Caco-2 (cell line): ENCODE measurements at regions of chr15 and their contacts with region 1.

Region 1: DNA sequence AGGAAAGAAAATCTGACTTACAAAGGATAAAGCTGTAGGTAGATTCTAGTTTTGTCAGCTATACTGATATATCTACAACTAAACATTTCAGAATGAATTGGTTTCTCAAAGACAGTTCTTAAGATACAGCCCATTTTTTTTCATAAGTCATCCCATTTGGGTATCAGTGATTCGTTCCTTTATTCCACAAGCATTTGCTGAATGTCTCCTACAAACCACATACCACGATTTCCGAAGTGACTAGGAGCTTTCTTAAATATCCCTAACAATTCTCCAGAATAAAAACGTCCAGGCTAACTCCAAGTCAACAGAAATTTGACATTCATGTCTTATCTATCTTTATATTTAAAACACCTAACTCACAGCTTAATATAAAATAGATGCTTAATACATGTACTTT is 59.8 kb downstream of the TP53BP1 start:
- DNase-seq: no peak
- H3K4me3 ChIP-seq: no peak overlapping the region
- H3K4me3 Mint-ChIP-seq: no peak overlapping the region
- H3K27ac Mint-ChIP-seq: no peak overlapping the region
- H3K4me1 ChIP-seq: no peaks in the 10 kb centered on the region
- H3K4me1 Mint-ChIP-seq: no peaks in the 10 kb centered on the region
- H3K27me3 ChIP-seq: no peaks in the 10 kb centered on the region
- H3K27me3 Mint-ChIP-seq: no peaks in the 10 kb centered on the region
- CTCF ChIP-seq: no peak

Region 2: GRCh38 chr15:43410572-43411214 is 22.5 kb before region 1 on chr15:
- CTCF ChIA-PET with region 1: interaction called, 12 read pairs
- POLR2A ChIA-PET with region 1: no interaction called
- intact Hi-C with region 1: no loop called
- DNase-seq: no peak
- H3K4me3 ChIP-seq: no peak overlapping the region
- H3K4me3 Mint-ChIP-seq: no peak overlapping the region
- H3K27ac Mint-ChIP-seq: no peak overlapping the region
- H3K4me1 ChIP-seq: no peaks in the 10 kb centered on the region
- H3K4me1 Mint-ChIP-seq: no peaks in the 10 kb centered on the region
- H3K27me3 ChIP-seq: no peaks in the 10 kb centered on the region
- H3K27me3 Mint-ChIP-seq: no peaks in the 10 kb centered on the region
- CTCF ChIP-seq: no peak

Region 3: DNA sequence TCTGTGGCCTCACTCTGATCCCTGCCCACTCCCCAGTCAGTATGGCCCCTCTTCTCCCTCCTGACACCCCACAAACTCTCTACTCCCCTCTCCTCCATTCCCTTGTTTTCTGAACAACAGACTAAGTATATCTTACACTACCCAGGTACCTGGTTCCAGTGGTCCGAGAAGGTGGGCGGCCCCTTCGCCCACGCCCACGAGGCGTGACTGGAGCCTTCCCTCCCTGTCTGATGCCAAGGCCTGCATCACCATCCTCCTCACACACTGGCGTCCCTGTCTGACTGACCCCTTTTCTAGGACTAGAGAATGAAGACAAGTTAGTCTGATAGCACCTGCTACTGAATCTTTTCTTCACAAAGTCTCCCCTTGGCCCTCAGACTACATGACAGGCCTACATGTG is 12.3 kb before region 1 on chr15:
- CTCF ChIA-PET with region 1: no interaction called
- POLR2A ChIA-PET with region 1: no interaction called
- intact Hi-C with region 1: no loop called
- DNase-seq: no peak
- H3K4me3 ChIP-seq: no peak overlapping the region
- H3K4me3 Mint-ChIP-seq: no peak overlapping the region
- H3K27ac Mint-ChIP-seq: no peak overlapping the region
- H3K4me1 ChIP-seq: no peaks in the 10 kb centered on the region
- H3K4me1 Mint-ChIP-seq: no peaks in the 10 kb centered on the region
- H3K27me3 ChIP-seq: no peaks in the 10 kb centered on the region
- H3K27me3 Mint-ChIP-seq: no peaks in the 10 kb centered on the region
- CTCF ChIP-seq: no peak